HepG2 (cell line): ENCODE measurements at regions of chr2 and their contacts with region 1.

Region 1: GRCh38 chr2:222797261-222797660 is 63.6 kb upstream of the ACSL3 start:
- DNase-seq: peak; percentile 74
- ATAC-seq: no peak
- H3K4me3 ChIP-seq: peak overlapping the region; percentile 22 to 51 (median 36); a peak in 5 of 6 replicates
- H3K27ac ChIP-seq: peak overlapping the region; percentile 96
- H3K4me1 ChIP-seq: peaks cover 80% of the 10 kb centered on the region
- H3K27me3 ChIP-seq: no peaks in the 10 kb centered on the region
- CTCF ChIP-seq: peak; percentile 67
- EP300 ChIP-seq: no peak
- POLR2A ChIP-seq: no peak
- RAD21 ChIP-seq: no peak

Region 2: DNA sequence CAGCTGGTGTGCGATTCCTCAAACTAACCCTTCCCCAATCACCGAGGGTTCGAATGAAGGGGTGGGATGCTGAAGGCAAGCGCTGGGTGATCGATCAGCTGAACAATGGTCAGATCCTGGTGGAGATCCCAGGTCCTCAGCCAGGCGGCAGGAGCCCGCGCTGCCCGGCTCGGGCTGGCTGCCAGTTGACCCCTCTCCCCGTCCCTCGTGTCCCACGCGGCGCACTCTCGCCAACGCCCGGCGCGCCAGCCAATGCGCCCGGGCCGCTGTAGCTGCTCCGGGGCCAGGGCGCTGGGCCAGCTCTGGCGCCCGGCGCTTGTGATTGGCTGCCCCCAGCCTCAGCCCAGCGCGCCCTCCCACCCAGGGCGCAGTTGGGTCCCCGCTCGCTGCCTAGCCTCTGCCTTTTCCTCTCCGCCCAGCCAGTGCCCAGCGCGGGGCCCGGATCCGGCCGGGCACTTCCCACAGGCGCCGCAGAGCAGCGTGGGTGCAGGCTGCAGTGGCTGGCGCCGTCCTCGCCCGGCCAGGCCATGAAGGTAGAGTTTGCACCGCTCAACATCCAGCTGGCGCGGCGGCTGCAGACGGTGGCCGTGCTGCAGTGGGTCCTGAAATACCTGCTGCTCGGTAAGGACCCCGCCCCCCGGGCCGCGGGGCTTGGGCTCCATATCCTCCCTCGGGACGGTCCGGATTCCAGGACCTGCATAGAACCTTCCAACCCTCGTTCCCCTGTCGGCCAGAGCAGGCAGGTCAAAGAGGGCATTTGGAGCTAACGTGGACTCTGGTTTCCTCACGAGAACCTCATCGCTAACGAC is 125.8 kb before region 1 on chr2 and contains the start of gene MOGAT1:
- CTCF ChIA-PET with region 1: no interaction called
- POLR2A ChIA-PET with region 1: no interaction called
- in situ Hi-C with region 1: no loop called
- intact Hi-C with region 1: loop called (anchors 1 kb)
- DNase-seq: peak; percentile 71
- ATAC-seq: peak; percentile 95
- H3K4me3 ChIP-seq: peak within 1 kb of the TSS; percentile 64 to 83 (median 79)
- H3K27ac ChIP-seq: peak within 1 kb of the TSS; percentile 75
- H3K4me1 ChIP-seq: peaks cover 58% of the 10 kb centered on the region
- H3K27me3 ChIP-seq: no peaks in the 10 kb centered on the region; a peak in 1 of 5 replicates
- CTCF ChIP-seq: peak; percentile 24; the same call in 1 of the 2 replicates
- EP300 ChIP-seq: peak in 1 of 2 experiments; percentile 5; a peak in 1 of 4 replicates
- POLR2A ChIP-seq: peak; percentile 86 to 87
- RAD21 ChIP-seq: peak; percentile 72; the same call in 1 of the 2 replicates
- total RNA-seq, gene MOGAT1: 1.3 and 4.3 TPM in 2 replicates

Region 3: DNA sequence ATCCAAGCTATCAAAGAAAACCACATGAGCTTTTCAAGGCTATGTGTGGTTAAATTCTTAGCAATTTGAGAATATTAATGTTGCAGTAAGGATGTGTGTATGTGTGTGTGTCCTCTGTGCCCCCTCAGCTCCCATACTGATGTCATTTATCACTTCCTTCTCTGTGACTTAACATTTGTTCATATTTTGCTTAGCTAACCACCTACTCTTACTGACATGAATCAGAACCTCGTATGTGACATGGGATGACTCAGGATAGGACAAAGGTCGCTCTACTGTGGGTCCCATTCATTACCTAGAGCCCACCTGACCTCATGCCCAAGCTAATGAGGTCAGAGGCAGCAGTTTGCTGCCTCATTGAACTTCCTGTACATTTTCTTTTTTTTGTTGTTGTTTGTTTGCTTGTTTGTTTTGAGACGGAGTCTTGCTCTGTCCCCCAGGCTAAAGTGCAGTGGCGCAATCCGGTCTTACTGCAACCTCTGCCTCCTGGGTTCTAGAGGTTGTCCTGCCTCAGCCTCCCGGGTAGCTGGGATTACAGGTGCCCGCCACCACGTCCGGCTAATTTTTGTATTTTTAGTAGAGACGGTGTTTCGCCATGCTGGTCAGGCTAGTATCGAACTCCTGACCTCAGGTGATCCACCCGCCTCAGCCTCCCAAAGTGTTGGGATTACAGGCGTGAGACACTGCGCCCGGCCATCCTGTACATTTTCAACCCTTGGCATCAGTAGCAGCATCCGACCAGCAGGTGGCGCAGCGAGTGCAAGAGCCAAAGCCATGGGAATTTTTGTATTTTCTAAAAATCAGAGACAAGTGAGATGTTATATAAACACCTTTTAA is 89.4 kb before region 1 on chr2:
- CTCF ChIA-PET with region 1: interaction called, 9 read pairs
- POLR2A ChIA-PET with region 1: interaction called, 98 read pairs
- in situ Hi-C with region 1: loop called (anchors 5 kb)
- intact Hi-C with region 1: loop called (anchors 1 kb)
- DNase-seq: peak; percentile 83
- ATAC-seq: peak; percentile 6; the same call in 2 of the 3 replicates
- H3K4me3 ChIP-seq: peak overlapping the region in 2 of 3 experiments; percentile 28 to 50; a peak in 3 of 6 replicates
- H3K27ac ChIP-seq: peak overlapping the region; percentile 47
- H3K4me1 ChIP-seq: peaks cover 55% of the 10 kb centered on the region
- H3K27me3 ChIP-seq: no peaks in the 10 kb centered on the region
- CTCF ChIP-seq: peak; percentile 94
- EP300 ChIP-seq: peak in 1 of 2 experiments; percentile 56; a peak in 3 of 4 replicates
- POLR2A ChIP-seq: no peak
- RAD21 ChIP-seq: peak; percentile 95

Region 4: DNA sequence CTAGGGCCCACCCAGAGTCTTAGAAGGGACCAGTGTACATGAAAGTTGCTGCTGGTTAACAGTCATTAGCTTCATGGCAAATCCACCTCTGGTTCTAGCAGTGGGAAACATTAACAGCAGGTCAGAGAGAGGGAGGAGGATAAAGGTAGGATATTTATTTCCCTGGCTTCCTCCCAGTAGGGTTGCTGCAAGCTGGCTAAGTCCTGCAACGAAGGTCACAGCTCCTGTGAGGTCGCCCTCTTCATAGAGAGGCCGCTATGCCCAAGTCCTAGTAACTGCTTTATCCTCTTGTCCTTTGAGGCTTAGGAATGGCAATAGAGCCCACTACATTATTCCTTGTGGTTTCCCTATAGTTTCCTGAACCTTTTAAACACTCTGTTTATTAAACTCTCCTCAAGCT is 20.5 kb before region 1 on chr2:
- CTCF ChIA-PET with region 1: no interaction called
- POLR2A ChIA-PET with region 1: interaction called, 31 read pairs
- in situ Hi-C with region 1: no loop called
- intact Hi-C with region 1: loop called (anchors 2 kb)
- DNase-seq: peak; percentile 62
- ATAC-seq: peak; percentile 92
- H3K4me3 ChIP-seq: no peak overlapping the region; a peak in 1 of 6 replicates
- H3K27ac ChIP-seq: peak overlapping the region; percentile 15
- H3K4me1 ChIP-seq: peaks cover 58% of the 10 kb centered on the region
- H3K27me3 ChIP-seq: no peaks in the 10 kb centered on the region
- CTCF ChIP-seq: 0 out of 2 replicates have a peak, but pooled peaks have one; percentile 13
- EP300 ChIP-seq: no peak
- POLR2A ChIP-seq: no peak
- RAD21 ChIP-seq: no peak

Region 5: GRCh38 chr2:222837511-222838056 is 40.3 kb after region 1 on chr2:
- CTCF ChIA-PET with region 1: interaction called, 5 read pairs
- POLR2A ChIA-PET with region 1: interaction called, 33 read pairs
- in situ Hi-C with region 1: no loop called
- intact Hi-C with region 1: loop called (anchors 1 kb)
- DNase-seq: peak; percentile 63
- ATAC-seq: no peak
- H3K4me3 ChIP-seq: no peak overlapping the region
- H3K27ac ChIP-seq: no peak overlapping the region
- H3K4me1 ChIP-seq: peaks cover 51% of the 10 kb centered on the region
- H3K27me3 ChIP-seq: no peaks in the 10 kb centered on the region
- CTCF ChIP-seq: no peak
- EP300 ChIP-seq: peak in 1 of 2 experiments; percentile 32; a peak in 1 of 4 replicates
- POLR2A ChIP-seq: no peak
- RAD21 ChIP-seq: no peak

Region 6: GRCh38 chr2:222860740-222861410 is 63.6 kb after region 1 on chr2 and contains the start of gene ACSL3:
- CTCF ChIA-PET with region 1: no interaction called
- POLR2A ChIA-PET with region 1: interaction called, 68 read pairs
- in situ Hi-C with region 1: loop called (anchors 5 kb)
- intact Hi-C with region 1: loop called (anchors 1 kb)
- DNase-seq: peak; percentile 92
- ATAC-seq: peak; percentile 98
- H3K4me3 ChIP-seq: peak within 1 kb of the TSS; percentile 81 to 99 (median 99)
- H3K27ac ChIP-seq: peak within 1 kb of the TSS; percentile 82
- H3K4me1 ChIP-seq: peaks cover 36% of the 10 kb centered on the region
- H3K27me3 ChIP-seq: no peaks in the 10 kb centered on the region; a peak in 1 of 5 replicates
- CTCF ChIP-seq: peak; percentile 32; the same call in 1 of the 2 replicates
- EP300 ChIP-seq: peak in 1 of 2 experiments; percentile 65
- POLR2A ChIP-seq: peak; percentile 99 to 100
- RAD21 ChIP-seq: peak; percentile 83
- total RNA-seq, gene ACSL3: 168 and 305 TPM in 2 replicates

Region 7: GRCh38 chr2:222939208-222939856 is 142.1 kb after region 1 on chr2:
- CTCF ChIA-PET with region 1: no interaction called
- POLR2A ChIA-PET with region 1: interaction called, 5 read pairs
- in situ Hi-C with region 1: no loop called
- intact Hi-C with region 1: loop called (anchors 1 kb)
- DNase-seq: peak; percentile 79
- ATAC-seq: peak; percentile 89
- H3K4me3 ChIP-seq: no peak overlapping the region
- H3K27ac ChIP-seq: no peak overlapping the region
- H3K4me1 ChIP-seq: no peaks in the 10 kb centered on the region
- H3K27me3 ChIP-seq: no peaks in the 10 kb centered on the region
- CTCF ChIP-seq: peak; percentile 86
- EP300 ChIP-seq: no peak
- POLR2A ChIP-seq: no peak
- RAD21 ChIP-seq: peak; percentile 83